Aorta (tissue), 5 donors: ENCODE measurements at regions of chr3 and their contacts with region 1.

Region 1: DNA sequence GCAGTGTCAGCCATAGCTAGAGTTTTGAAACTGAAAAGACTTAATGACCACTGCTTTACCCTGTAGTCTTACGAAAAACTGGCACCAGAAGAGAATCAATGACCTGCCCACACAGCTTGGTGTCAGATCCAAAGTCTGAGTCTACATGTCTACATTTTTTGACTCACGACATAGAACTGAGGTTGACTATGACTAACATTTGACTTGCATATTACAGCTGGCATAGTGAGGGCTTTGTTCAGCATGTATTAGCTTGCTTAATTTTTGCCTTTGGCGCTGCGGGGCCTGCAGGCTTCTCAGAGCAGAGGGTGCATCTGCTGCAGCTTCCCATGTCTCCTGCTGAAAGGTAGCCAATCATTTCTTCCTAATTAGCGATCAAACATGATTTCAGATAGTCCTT is 167.0 kb downstream of the EBLN2 start:
- DNase-seq: no peak
- ATAC-seq: no peak
- H3K4me3 ChIP-seq: no peak overlapping the region
- H3K27ac ChIP-seq: no peak overlapping the region
- H3K4me1 ChIP-seq: peaks cover 2% of the 10 kb centered on the region in 2 donors
- H3K27me3 ChIP-seq: no peaks in the 10 kb centered on the region

Region 2: DNA sequence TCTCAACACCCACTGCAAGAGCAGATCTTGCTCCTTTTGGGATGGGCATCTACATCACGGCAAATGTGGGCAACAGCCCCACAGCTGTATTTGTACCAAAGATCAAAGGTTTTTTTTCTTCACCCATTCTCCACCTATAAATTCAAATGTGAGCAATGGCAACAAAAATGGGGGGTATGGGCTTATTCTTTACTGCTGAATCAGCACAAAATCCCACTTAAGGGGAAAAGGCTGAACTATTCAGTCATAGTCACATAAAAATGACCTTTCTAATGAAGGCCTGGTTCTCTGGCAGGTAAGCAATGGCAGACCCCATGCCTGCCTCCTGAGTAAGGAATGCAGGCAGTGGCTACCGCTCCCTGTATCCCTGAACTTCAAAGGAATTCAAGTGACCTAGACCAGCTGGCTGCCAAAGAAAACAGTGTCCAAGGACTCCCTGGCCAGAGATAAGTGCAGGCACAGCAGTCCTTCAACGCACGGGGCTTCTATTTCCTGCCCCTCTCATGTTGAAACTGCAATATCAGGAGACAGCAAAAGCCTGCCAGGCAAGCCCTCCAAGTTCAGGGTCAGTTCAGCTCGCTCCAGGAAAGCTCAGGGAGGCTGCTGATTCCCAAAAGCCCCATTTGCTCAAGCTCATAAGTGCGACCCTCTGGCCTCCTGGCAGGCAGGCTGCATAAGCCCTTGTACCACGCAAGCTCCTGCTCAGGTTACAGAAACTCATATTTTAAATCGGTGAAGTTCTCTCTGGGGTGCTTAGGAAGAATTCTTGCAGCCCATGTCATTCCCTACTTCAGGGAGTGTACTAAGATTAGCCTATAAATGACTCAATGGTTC is 262.2 kb after region 1 on chr3:
- intact Hi-C with region 1: loop called in 1 of 2 experiments (anchors 10 kb)
- DNase-seq: peak in 1 of 2 donors; percentile 65
- ATAC-seq: peak; percentile 33
- H3K4me3 ChIP-seq: no peak overlapping the region
- H3K27ac ChIP-seq: no peak overlapping the region
- H3K4me1 ChIP-seq: peaks cover 12 to 15% of the 10 kb centered on the region in 2 donors
- H3K27me3 ChIP-seq: no peaks in the 10 kb centered on the region